Adrenal gland (tissue), 19 donors: ENCODE measurements at regions of chr5 and their contacts with region 1.

Region 1: GRCh38 chr5:135887351-135887864 is 8.2 kb downstream of the IL9 start:
- DNase-seq: peak; percentile 43 to 76 (median 61)
- H3K4me3 ChIP-seq: no peak overlapping the region
- H3K27ac ChIP-seq: no peak overlapping the region
- H3K4me1 ChIP-seq: no peaks in the 10 kb centered on the region
- H3K27me3 ChIP-seq: peaks cover 8% of the 10 kb centered on the region
- CTCF ChIP-seq: peak; percentile 73 to 85 (median 83)
- POLR2A ChIP-seq: no peak

Region 2: DNA sequence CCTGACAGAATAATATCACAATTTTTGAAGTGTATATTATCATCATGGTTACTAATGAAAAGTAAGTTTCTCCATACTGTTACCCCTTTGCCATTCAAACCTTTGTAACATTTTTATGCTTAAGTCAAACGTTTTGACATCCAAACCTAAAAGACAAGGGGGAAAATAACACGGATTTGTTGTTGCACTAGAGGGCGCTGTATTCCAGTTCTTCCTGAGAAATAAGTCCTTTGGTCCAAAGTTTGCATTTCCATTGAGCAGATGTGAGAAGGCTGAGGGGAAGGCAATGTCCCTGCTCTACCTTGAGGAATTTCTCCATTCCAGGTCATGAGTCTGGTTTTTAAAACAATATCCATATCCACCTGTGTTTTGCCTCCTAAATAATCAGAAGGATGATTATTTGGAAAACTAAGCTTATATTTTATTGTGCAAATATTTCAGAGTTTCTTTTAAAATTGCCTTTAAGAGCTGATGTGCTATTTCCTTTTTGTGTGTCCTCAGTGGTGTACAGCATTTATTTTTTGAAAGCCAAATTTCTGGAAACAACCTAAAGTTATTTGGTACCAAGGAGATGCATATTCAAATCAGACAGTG is 57.7 kb after region 1 on chr5:
- intact Hi-C with region 1: loop called in 1 of 2 experiments (anchors 10 kb)
- DNase-seq: peak; percentile 37 to 80 (median 57)
- H3K4me3 ChIP-seq: no peak overlapping the region
- H3K27ac ChIP-seq: no peak overlapping the region
- H3K4me1 ChIP-seq: no peaks in the 10 kb centered on the region
- H3K27me3 ChIP-seq: no peaks in the 10 kb centered on the region
- CTCF ChIP-seq: peak; percentile 72 to 89 (median 82)
- POLR2A ChIP-seq: no peak

Region 3: GRCh38 chr5:135955525-135955924 is 68.1 kb after region 1 on chr5:
- intact Hi-C with region 1: no loop called
- DNase-seq: no peak
- H3K4me3 ChIP-seq: no peak overlapping the region
- H3K27ac ChIP-seq: no peak overlapping the region
- H3K4me1 ChIP-seq: no peaks in the 10 kb centered on the region
- H3K27me3 ChIP-seq: peaks cover 3% of the 10 kb centered on the region
- CTCF ChIP-seq: no peak
- POLR2A ChIP-seq: no peak

Region 4: DNA sequence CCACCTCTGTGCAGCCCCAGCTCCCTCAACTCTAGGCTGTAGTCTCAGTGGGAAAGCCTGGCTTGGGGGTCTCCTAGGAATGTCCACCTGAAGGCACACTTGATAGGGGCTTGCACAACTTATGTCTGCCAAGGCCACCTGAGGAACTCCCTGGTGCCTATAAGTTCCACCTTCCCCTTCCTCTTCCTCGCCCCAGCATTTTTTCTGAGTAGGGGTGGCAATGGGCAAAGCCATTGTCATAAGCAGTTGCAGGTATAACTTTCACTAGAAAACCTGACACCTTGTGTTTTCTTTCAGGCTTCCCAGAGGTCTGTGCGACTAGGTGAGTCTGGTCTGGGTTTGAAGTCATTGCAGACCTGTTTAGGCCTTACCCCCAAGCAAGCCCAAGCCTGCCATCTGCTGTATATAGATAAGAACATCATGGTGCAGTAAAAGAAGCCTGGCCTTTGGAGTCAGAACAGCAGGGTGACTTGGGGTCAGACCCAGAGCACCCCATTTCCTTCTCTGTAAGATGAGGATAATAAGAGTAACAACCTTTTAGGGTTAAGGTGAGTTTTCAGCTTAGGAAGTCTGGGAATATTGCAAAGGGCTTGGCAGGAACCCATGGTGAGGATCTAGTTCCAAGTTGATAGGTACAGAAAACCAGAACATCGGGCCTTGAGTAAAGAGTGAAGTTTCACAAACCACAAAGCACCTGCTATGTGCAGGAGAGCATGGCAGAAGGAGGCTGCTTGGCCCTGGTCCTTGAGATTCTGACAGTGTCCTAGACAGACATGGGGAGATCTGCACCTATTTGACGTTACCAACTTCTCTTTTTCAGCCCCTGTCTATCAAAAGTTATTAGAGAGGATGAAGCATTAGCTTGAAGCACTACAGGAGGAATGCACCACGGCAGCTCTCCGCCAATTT is 175.2 kb after region 1 on chr5:
- intact Hi-C with region 1: loop called in 1 of 2 experiments (anchors 10 kb)
- DNase-seq: peak in 1 of 7 donors; percentile 49
- H3K4me3 ChIP-seq: no peak overlapping the region
- H3K27ac ChIP-seq: no peak overlapping the region
- H3K4me1 ChIP-seq: no peaks in the 10 kb centered on the region
- H3K27me3 ChIP-seq: no peaks in the 10 kb centered on the region
- CTCF ChIP-seq: peak in 5 of 6 experiments; percentile 22 to 37 (median 26)
- POLR2A ChIP-seq: no peak

Region 5: DNA sequence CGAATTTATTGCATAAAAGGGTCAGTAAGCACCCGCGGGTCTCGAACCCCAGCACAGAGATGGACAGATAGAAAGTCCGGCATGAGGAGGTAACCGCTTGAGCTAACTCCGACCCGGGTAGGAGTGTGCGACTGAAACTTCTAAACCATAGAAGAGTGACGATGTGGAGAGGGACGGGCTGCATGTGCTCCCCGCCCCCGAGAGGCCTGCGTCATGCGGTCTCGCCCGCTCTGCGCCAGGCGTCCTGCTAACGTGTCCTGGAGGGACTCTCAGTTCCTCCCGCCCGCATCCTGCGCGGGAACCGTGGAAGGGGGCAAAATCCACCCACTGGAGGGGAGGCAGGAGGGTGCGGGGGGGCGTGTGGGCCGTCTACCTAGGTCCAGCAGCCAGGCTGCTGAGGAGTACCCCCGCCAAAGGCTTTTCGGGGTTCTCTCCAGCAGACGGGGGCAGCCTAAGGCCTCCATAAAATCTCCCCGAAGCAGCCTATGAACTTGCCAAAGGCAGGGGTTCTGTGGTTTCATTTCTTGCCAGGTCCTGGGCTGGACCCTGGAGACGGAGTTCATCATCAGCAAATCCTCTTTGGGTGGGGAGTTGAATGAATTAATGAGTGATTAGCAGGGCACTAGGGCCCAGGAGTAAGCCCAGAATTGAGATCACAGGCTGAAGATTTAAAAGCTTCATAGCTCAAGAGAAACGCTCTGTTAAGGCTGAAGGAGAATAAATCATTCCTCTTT is 193.2 kb after region 1 on chr5:
- intact Hi-C with region 1: loop called in 1 of 2 experiments (anchors 5 kb)
- DNase-seq: peak; percentile 86 to 94 (median 90)
- H3K4me3 ChIP-seq: peak overlapping the region in 1 of 4 donors; percentile 49
- H3K27ac ChIP-seq: peak overlapping the region in 3 of 5 donors; percentile 16 to 84 (median 71)
- H3K4me1 ChIP-seq: no peaks in the 10 kb centered on the region
- H3K27me3 ChIP-seq: no peaks in the 10 kb centered on the region
- CTCF ChIP-seq: no peak
- POLR2A ChIP-seq: peak; percentile 17 to 53

Region 6: GRCh38 chr5:136202469-136203205 is 315.2 kb after region 1 on chr5:
- intact Hi-C with region 1: loop called in 1 of 2 experiments (anchors 10 kb)
- DNase-seq: no peak
- H3K4me3 ChIP-seq: no peak overlapping the region
- H3K27ac ChIP-seq: no peak overlapping the region
- H3K4me1 ChIP-seq: no peaks in the 10 kb centered on the region
- H3K27me3 ChIP-seq: no peaks in the 10 kb centered on the region
- CTCF ChIP-seq: no peak
- POLR2A ChIP-seq: no peak

Region 7: GRCh38 chr5:136212252-136212721 is 324.9 kb after region 1 on chr5:
- intact Hi-C with region 1: loop called (anchors 5 to 10 kb)
- DNase-seq: peak; percentile 31 to 66 (median 60)
- H3K4me3 ChIP-seq: no peak overlapping the region
- H3K27ac ChIP-seq: no peak overlapping the region
- H3K4me1 ChIP-seq: no peaks in the 10 kb centered on the region
- H3K27me3 ChIP-seq: peaks cover 13% of the 10 kb centered on the region
- CTCF ChIP-seq: peak; percentile 56 to 87 (median 82)
- POLR2A ChIP-seq: no peak